BJ (cell line): ENCODE measurements at regions of chr4 and their contacts with region 1.

Region 1: DNA sequence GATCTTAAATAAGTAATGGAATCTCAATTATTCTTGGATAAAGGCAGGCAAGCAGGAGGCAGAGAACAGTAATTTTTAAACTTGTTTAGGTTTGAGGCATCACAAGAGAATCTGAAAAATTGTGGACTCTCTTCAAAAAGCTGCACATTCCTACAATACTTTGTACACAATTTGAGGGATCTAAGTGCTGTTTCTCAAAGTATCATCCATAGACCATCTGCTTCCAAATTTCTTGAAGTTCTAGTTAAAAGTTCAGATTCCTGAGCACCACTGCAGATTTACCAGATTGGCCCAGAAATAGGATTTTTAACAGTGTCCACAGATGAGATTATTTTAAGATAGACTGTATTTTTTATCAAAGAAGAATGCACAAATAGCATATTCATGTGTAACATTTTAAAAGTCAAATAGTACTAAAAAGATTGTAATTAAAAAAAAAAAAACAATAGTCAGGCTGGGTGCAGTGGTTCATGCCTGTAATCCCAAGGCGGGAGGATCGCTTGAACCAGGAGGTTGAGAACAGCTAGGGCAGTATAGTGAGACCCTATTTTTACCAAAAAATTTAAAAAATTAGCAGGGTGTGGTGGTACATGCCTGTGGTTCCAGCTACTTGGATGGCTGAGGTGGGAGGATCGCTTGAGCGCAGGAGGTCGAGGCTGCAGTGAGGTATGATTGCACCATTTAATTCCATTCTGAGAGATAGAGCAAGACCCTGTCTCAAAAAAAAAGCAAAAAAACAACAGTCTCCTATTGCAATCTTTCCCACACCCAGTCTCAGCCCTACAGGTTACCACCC is 14.2 kb upstream of the FNIP2 start:
- DNase-seq: peak; percentile 91
- H3K4me3 ChIP-seq: no peak overlapping the region
- H3K27me3 ChIP-seq: no peaks in the 10 kb centered on the region
- CTCF ChIP-seq: no peak

Region 2: DNA sequence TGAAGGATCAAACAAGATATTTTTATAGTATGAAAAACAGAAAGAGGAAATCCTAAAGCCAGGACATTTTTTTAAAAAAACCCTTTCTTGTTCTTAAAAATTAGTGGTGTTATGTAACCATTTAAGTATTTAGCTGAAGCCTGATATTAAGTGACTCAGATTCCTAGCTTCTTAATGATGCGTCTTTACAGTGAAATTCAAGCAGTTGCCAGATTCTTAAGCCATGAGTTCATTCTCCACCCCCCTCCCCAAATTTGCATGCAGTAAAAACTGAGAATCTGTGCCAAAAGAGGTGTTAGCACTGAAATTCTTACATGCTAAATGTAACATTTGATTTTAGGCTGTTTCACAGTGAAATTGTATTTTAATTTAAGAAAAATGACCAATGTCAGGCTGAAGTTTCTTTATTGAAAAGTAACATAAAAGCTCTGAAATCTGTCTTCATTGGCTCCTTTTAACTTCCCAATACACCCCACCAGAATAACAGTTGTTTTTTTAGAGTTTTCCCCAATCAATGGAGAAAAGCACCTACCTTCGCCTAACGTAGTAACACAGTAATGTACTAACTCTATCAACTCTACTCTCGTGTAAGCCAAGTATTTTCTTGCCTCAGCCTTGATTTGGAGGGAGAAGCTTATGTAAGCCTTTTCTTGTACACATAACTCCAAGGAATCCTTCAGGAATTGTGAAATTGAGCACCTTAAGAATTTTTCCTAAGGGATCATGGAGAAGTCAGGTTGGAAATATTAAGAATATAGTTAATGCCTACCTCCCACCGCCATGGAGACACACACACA is 529.3 kb after region 1 on chr4:
- CTCF ChIA-PET with region 1: no interaction called
- POLR2A ChIA-PET with region 1: interaction called, 10 read pairs
- DNase-seq: peak; percentile 72
- H3K4me3 ChIP-seq: no peak overlapping the region
- H3K27me3 ChIP-seq: no peaks in the 10 kb centered on the region
- CTCF ChIP-seq: no peak